Pancreas (tissue), 10 donors: ENCODE measurements at regions of chr9 and their contacts with region 1.

Region 1: DNA sequence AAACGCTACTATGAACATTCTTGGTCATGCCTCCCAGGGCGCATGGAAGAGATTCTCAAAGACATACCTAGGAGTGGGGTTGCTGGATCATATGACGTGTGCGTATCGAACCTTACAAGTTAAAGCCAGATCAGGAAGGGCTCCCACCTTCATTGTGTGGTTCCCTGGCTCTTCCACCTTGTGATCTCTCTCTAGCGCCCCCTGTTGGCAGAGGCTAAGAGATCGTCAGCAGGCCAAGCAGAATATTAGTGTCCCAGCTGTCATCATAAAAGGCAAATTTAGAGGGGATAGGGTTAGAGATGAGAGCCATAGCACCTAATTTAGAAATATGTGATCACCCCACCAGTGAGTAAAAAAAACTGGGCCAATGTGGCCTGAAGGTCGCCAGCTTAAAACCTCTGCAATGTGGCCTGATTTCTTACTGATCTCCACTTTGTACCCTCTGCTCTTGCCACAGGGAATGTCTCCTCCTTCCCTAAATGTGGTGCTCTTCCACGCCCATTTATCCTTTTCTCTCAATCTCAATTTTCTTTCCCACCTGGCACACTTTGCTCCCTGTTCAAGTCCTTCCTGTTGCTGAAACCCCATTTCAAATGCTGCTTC is 91.7 kb upstream of the SHB start:
- DNase-seq: peak in 5 of 6 donors; percentile 54 to 77 (median 72)
- ATAC-seq: peak; percentile 68 to 85 (median 75)
- H3K4me3 ChIP-seq: no peak overlapping the region
- H3K27ac ChIP-seq: no peak overlapping the region
- H3K4me1 ChIP-seq: peaks cover 0 to 8% (median 3%) of the 10 kb centered on the region in 3 donors
- H3K27me3 ChIP-seq: no peaks in the 10 kb centered on the region
- CTCF ChIP-seq: peak; percentile 70 to 91 (median 76)

Region 2: GRCh38 chr9:38251036-38251860 is 90.5 kb after region 1 on chr9:
- intact Hi-C with region 1: loop called in 1 of 3 experiments (anchors 10 kb)
- DNase-seq: no peak
- ATAC-seq: no peak
- H3K4me3 ChIP-seq: no peak overlapping the region
- H3K27ac ChIP-seq: no peak overlapping the region
- H3K4me1 ChIP-seq: no peaks in the 10 kb centered on the region
- H3K27me3 ChIP-seq: no peaks in the 10 kb centered on the region
- CTCF ChIP-seq: no peak